ENCODE measurements at regions of chr3 and their contacts with region 1.

Region 1: DNA sequence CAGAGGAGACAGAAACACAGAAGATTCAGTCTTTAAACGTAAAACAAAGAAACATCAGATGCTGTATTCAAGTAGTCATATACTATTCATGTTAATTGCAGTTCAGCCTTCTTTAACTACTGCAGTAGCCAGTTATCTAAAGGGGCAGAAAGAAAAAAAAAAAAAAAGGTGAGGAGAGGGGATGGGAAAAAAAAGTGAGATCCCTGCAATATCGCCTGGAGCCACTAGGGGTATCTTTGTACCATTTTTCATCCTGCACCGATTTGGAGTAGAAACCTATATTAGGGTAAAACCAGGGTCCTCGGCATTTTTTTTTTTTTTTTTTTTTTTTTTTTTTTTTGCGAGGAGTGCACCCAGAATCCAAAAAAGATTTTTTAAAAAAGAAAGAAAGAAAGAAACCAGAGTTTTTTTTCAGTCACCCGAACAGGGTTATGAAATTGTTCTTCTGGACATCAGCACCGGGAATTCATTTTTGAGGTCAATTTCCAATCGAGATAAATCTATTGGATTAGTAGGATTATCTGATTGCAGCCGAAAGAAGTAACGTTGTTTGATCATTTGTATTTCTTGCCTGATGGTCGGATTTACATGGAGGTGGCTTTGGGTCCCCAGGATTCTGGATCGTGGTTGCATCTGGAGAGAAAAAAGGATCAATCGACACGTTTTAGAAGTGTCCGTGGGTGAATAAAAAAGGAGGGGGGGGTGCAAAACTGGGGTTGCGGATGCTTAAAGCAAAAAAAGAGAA is 186.7 kb downstream of the NLGN1 start:
- DNase-seq: peak in 1 of 2 experiments; percentile 56
- H3K4me3 ChIP-seq: peak overlapping the region; percentile 20; the same call in 1 of the 2 replicates
- H3K27ac ChIP-seq: no peak overlapping the region
- H3K4me1 ChIP-seq: no peaks in the 10 kb centered on the region
- H3K27me3 ChIP-seq: no peaks in the 10 kb centered on the region
- CTCF ChIP-seq: peak; percentile 77

Region 2: GRCh38 chr3:173663696-173664111 is 79.4 kb after region 1 on chr3:
- CTCF ChIA-PET with region 1: interaction called, 13 read pairs
- POLR2A ChIA-PET with region 1: no interaction called
- intact Hi-C with region 1: no loop called
- DNase-seq: no peak
- H3K4me3 ChIP-seq: no peak overlapping the region
- H3K27ac ChIP-seq: no peak overlapping the region
- H3K4me1 ChIP-seq: no peaks in the 10 kb centered on the region
- H3K27me3 ChIP-seq: no peaks in the 10 kb centered on the region
- CTCF ChIP-seq: no peak